Mucosa of descending colon (tissue), 3 donors: ENCODE measurements at regions of chr20 and their contacts with region 1.

Region 1: DNA sequence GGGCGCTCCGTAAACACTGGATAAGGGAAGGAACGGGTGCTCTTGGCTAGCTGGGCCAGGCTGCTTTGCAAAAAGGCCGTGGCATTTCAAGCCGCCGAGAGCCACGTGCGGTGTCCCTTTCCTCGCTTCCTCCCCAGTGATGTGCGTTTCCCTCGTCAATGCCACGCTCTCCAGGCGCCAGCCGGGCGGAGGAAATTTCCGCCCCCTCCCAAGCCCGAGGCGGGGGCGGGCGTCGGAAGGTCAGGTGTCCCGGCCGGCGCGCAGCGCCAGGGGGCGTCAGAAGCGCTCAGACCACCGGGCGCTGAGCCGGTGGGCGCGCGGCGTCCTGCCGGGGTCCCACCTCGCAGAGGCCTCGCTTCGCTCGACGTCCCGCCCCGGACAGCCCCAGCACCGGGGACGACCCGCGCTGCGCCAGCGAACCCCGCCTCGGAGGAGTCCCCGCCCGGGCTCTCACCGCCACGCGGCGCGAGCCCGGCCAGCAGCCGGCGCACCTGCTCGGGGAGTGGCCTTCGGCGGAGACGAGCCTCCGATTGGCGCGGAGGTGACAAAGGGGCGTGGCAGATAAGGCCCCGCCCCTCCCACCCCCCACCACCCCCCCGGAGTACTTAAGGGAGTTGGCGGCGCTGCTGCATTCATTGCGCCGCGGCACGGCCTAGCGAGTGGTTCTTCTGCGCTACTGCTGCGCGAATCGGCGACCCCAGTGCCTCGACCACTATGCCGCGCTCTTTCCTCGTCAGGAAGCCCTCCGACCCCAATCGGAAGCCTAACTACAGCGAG is at the start of gene SNAI1:
- DNase-seq: peak; percentile 73 to 90 (median 89)
- ATAC-seq: peak; percentile 98
- H3K4me3 ChIP-seq: no peak within 1 kb of the TSS
- H3K4me1 ChIP-seq: peaks cover 24% of the 10 kb centered on the region
- CTCF ChIP-seq: peak; percentile 34
- total RNA-seq, gene SNAI1: 0.78 to 4.5 (median 0.96) TPM

Region 2: DNA sequence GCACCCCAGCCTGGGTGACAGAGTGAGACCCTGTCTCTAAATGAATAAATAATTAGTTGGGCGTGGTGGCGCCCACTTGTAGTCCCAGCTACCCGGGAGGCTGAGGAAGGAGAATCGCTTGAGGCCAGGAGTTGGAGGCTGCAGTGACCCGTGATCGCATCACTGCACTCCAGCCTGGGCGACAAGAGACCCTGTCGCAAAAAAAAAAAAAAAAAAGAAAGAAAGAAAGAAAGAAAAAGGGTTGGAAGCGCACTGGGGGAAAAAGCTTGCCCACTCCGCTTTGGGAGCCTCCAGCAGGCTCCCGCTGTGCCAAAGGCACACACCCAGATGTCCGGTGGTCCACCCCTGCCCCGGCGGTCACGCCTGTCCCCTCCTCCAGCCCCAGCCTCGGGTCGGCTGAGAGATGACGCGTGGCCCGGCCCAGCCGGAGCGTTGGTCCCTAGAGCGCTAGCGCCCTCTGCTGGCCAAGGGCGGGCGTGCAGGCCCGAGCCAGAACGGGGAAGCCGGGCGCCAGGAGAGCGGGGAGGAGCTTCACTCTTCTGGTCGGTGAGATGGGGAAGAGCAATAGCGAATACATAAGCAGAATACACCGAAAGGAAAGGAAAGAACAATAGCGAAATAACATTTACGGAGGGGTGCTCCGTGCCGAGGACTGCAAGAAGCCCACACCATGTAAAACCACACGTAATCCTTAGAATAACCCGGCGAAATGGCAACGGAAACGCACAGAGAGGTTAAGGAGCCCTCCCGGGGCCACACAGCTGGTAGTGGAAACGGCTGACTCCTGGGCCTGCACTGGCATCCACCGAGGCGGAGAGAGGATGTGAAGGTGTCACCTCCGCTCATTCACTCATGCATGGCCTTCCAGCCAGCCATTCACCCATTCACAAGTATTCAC is 88.7 kb after region 1 on chr20:
- intact Hi-C with region 1: loop called (anchors 5 kb)
- DNase-seq: peak; percentile 90 to 96 (median 96)
- ATAC-seq: peak; percentile 100
- H3K4me3 ChIP-seq: no peak overlapping the region
- H3K4me1 ChIP-seq: peaks cover 7% of the 10 kb centered on the region
- CTCF ChIP-seq: peak; percentile 99

Region 3: DNA sequence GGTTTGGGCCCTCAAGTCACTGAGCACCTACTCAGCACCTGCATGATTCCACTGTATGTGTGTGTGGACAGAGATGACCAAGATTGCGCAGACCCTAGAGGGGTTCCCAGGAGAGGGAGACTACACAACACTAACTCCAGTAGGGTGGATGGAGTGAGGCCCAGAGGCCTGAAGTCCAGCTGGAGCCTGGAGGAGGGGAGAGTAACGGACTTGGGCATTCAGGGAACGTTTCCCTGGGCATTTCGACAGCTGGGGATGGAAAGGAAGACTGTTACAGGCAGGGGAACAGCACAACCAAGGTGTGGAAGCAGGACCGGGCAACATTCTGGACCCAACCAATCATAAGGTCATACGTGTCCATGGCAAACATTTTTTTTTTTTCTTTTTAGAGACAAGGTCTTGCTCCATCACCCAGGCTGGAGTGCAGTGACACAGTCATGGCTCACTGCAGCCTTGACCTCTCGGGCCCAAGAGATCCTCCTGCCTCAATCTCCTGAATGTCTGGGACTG is 197.0 kb after region 1 on chr20:
- intact Hi-C with region 1: loop called in 1 of 2 experiments (anchors 5 kb)
- DNase-seq: no peak
- ATAC-seq: peak; percentile 25
- H3K4me3 ChIP-seq: no peak overlapping the region
- H3K4me1 ChIP-seq: no peaks in the 10 kb centered on the region
- CTCF ChIP-seq: no peak